CD4-positive, alpha-beta memory T cell (primary cell): ENCODE measurements at regions of chr14 and their contacts with region 1.

Region 1: DNA sequence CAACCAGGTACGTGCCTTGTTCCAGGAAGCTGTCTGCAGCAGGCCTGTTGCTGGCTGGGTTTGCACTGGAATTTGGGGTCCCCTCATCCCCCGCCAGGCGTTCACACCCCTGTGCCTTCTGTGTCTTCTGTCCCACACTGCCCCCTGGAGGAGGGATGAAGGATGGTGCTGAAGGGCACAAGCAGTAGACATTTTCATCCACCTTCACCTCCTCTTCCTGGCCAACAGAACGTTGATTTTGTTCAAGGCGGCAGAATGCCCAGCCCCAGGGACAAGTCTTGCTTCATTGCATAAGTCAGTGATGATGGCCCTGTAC is 122.1 kb downstream of the CALM1 start:
- DNase-seq: peak in 4 of 5 donors; percentile 39 to 53 (median 48)
- H3K4me3 ChIP-seq: no peak overlapping the region
- H3K4me3 Mint-ChIP-seq: peak overlapping the region in 1 of 8 donors; percentile 36
- H3K27ac ChIP-seq: no peak overlapping the region
- H3K27ac Mint-ChIP-seq: peak overlapping the region in 1 of 7 donors; percentile 7
- H3K4me1 ChIP-seq: no peaks in the 10 kb centered on the region
- H3K4me1 Mint-ChIP-seq: no peaks in the 10 kb centered on the region
- H3K27me3 ChIP-seq: no peaks in the 10 kb centered on the region
- H3K27me3 Mint-ChIP-seq: peaks cover 2 to 4% of the 10 kb centered on the region in 2 donors

Region 2: DNA sequence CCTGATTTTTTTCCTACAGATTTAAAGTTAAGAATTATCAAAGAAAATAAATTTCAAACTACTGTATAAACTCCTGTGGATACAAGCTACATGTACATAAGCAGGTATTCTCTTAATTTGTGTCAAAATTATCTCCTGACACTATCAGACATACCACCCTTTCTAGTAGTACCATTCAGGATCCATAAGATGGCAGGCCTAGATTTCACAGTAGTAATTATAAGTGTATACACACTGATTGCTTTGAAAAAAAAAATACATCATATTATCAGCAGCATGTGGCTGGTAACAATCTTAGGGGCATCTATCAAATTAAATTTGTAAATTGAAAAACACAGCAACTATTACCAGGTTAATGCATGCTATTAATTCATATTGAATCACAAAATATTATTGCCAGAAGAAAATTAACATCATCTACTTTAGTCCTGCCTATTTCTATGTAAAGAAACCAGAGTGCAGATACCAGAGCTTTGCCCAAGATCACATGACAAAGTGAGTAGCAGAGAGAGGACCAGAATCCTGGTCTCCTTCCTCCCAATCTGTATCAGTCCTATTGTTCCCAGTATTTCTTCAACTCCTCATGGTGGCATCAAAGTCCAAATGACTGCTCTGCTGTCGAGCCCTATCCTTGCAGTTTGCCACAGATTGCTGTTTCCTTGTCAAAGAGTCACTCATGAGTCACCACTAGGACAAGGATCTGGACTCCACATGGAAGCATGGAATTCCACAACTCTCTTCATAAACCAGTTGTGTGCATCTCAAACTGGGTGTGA is 149.8 kb before region 1 on chr14:
- CTCF ChIA-PET with region 1: interaction called, 16 read pairs
- POLR2A ChIA-PET with region 1: no interaction called
- intact Hi-C with region 1: loop called (anchors 1 kb)
- DNase-seq: peak in 4 of 5 donors; percentile 43 to 51 (median 44)
- H3K4me3 ChIP-seq: no peak overlapping the region
- H3K4me3 Mint-ChIP-seq: no peak overlapping the region
- H3K27ac ChIP-seq: no peak overlapping the region
- H3K27ac Mint-ChIP-seq: no peak overlapping the region
- H3K4me1 ChIP-seq: no peaks in the 10 kb centered on the region
- H3K4me1 Mint-ChIP-seq: peaks cover 0 to 2% (median 1%) of the 10 kb centered on the region in 4 donors
- H3K27me3 ChIP-seq: no peaks in the 10 kb centered on the region
- H3K27me3 Mint-ChIP-seq: no peaks in the 10 kb centered on the region